ENCODE measurements at regions of chr18 and their contacts with region 1.

Region 1: DNA sequence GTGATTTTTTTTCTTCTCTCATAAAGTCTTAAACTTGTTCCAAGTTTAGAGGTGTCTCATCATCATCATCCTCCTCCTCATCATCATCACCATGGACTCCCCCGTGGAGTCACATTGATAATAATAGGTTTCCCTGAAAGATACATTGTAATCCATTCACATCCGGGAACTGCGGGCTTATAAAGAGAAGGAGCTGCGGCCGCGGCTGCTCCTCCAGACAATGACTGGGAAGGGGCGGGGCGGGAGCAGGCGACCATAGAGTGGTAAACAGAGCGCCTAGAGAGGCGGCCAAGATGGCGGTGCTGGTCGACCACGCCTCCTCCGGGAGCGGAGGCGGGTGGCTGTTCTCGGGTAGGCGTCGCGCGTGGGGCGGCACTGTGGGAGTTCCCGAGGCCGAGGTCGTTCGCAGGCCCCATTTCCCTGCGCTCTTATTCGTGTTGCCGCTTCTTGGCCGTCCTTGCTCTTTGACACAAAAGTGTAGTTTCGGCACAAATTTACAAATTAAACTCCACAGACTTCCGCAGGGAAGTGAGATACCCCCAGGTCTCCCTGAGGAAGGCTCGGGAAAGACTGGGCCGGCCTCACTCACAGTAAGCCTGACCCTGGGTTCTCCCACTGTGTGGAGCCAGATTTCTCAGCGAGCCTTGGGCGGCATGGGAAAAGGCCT is 1.8 kb upstream of the TCF4 start:
- DNase-seq: peak; percentile 97
- H3K4me3 ChIP-seq: peak overlapping the region; percentile 87 to 100 (median 98)
- H3K27ac ChIP-seq: peak overlapping the region; percentile 96
- H3K4me1 ChIP-seq: peaks cover 23% of the 10 kb centered on the region
- H3K27me3 ChIP-seq: no peaks in the 10 kb centered on the region
- CTCF ChIP-seq: no peak
- POLR2A ChIP-seq: peak; percentile 81

Region 2: GRCh38 chr18:55096261-55096951 is 493.4 kb before region 1 on chr18:
- CTCF ChIA-PET with region 1: no interaction called
- POLR2A ChIA-PET with region 1: no interaction called
- dilution Hi-C with region 1: no loop called
- intact Hi-C with region 1: loop called (anchors 5 kb)
- DNase-seq: peak; percentile 64
- H3K4me3 ChIP-seq: no peak overlapping the region
- H3K27ac ChIP-seq: peak overlapping the region; percentile 80
- H3K4me1 ChIP-seq: peaks cover 39% of the 10 kb centered on the region
- H3K27me3 ChIP-seq: peaks cover 0 to 8% of the 10 kb centered on the region in 2 experiments
- CTCF ChIP-seq: peak; percentile 46 to 59
- POLR2A ChIP-seq: no peak

Region 3: GRCh38 chr18:55322178-55322735 is 267.5 kb before region 1 on chr18:
- CTCF ChIA-PET with region 1: interaction called, 3 read pairs
- POLR2A ChIA-PET with region 1: no interaction called
- dilution Hi-C with region 1: no loop called
- intact Hi-C with region 1: loop called (anchors 5 kb)
- DNase-seq: peak; percentile 96
- H3K4me3 ChIP-seq: peak overlapping the region; percentile 28 to 89 (median 52)
- H3K27ac ChIP-seq: peak overlapping the region; percentile 82
- H3K4me1 ChIP-seq: peaks cover 66% of the 10 kb centered on the region
- H3K27me3 ChIP-seq: no peaks in the 10 kb centered on the region
- CTCF ChIP-seq: peak; percentile 4 to 20
- POLR2A ChIP-seq: no peak

Region 4: DNA sequence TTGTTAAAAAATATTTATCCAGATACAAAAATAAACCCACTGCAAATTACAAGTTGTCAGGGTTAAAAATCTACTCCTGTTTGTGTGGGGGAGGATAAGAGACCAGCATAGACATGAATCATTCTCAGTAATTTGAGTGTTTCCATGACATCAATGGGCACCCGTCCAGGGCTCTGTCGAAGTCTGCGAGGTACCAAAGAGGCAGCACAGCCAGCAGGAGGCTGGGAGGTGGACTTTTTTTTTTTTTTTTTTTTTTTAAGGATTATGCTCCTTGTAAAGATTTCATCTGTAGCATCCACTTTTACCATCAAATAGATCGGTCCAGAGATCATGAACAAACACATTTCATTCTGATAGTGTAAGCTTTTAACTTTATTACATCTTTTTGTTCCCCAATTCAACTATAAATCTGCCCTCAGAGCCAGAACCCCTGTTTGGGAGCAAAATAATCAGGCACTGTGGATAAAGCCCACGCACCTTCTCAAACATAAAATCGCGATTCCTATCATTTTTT is 183.8 kb before region 1 on chr18:
- CTCF ChIA-PET with region 1: interaction called, 6 read pairs
- POLR2A ChIA-PET with region 1: interaction called, 4 read pairs
- dilution Hi-C with region 1: no loop called
- intact Hi-C with region 1: loop called (anchors 1 kb)
- DNase-seq: peak; percentile 97
- H3K4me3 ChIP-seq: no peak overlapping the region
- H3K27ac ChIP-seq: peak overlapping the region; percentile 73
- H3K4me1 ChIP-seq: peaks cover 48% of the 10 kb centered on the region
- H3K27me3 ChIP-seq: no peaks in the 10 kb centered on the region
- CTCF ChIP-seq: peak in 1 of 2 donors; percentile 20
- POLR2A ChIP-seq: no peak

Region 5: DNA sequence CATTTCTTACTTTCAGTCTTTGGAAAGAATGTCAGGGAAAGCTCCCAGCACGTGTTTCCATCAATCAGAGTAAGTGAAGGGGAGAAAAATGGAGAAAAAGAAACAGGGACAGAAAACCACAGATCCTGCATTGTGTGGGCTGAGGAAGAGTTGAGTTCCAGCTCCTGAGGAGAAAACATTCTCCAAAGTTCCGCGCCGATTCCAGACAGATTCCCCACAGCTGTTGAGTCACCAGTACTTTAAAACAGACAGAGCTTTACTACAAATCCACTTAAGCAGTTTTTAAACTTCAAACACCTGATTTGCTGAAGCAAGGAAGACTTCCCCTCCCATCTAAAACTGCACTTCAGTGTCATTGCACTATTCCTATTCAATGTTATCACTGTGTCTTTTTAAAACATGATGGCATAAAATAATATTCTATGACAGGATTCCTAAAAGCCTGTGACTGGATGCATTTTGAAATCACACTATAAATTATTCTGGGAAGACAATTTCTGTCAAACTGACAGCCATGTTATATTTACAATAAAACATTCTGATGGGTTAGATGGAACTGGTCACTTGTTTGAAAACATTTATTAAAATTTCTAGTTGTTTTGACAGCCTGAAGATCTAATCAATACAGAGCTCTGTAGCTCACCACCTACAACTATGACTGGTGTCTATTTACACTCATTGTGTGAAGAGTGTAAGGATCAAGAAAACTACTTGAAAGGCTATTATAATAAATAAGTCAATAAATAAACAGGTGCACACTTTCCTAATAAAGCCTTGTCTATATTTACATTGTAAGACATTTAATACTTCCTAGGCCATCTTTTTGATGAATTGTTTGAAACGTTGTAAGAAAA is 42.7 kb before region 1 on chr18:
- CTCF ChIA-PET with region 1: no interaction called
- POLR2A ChIA-PET with region 1: no interaction called
- dilution Hi-C with region 1: no loop called
- intact Hi-C with region 1: no loop called
- DNase-seq: peak; percentile 19
- H3K4me3 ChIP-seq: no peak overlapping the region
- H3K27ac ChIP-seq: no peak overlapping the region
- H3K4me1 ChIP-seq: no peaks in the 10 kb centered on the region
- H3K27me3 ChIP-seq: no peaks in the 10 kb centered on the region
- CTCF ChIP-seq: no peak
- POLR2A ChIP-seq: no peak

Region 6: GRCh38 chr18:55573386-55573785 is 16.4 kb before region 1 on chr18:
- CTCF ChIA-PET with region 1: no interaction called
- POLR2A ChIA-PET with region 1: no interaction called
- dilution Hi-C with region 1: no loop called
- intact Hi-C with region 1: no loop called
- DNase-seq: no peak
- H3K4me3 ChIP-seq: no peak overlapping the region
- H3K27ac ChIP-seq: no peak overlapping the region
- H3K4me1 ChIP-seq: no peaks in the 10 kb centered on the region
- H3K27me3 ChIP-seq: no peaks in the 10 kb centered on the region
- CTCF ChIP-seq: no peak
- POLR2A ChIP-seq: no peak

Region 7: DNA sequence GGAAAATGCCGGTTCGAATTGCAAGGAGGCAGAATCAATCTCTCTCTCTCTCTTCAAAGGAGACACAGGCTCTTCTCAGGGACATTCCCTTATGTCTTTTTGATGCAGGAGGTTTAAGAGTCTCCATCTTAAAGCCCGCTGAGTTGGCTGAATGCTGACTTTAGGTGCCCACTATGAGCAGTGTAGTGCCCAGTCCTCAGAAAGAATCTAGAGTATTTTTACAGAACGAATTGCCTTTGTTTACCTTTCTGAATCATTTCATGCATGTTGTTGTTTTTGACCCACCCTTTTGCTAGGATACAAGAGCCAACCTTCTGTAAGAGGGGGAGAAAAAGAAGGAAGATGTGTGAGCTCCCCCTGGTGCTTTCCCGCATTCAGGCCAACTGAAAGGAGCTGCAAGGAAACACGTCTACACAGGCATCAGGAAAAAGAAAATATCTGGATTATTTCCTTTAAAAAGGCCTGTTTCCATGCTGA is 191.8 kb after region 1 on chr18:
- CTCF ChIA-PET with region 1: interaction called, 6 read pairs
- POLR2A ChIA-PET with region 1: interaction called, 3 read pairs
- dilution Hi-C with region 1: no loop called
- intact Hi-C with region 1: loop called (anchors 1 kb)
- DNase-seq: peak; percentile 90
- H3K4me3 ChIP-seq: no peak overlapping the region
- H3K27ac ChIP-seq: peak overlapping the region; percentile 47
- H3K4me1 ChIP-seq: peaks cover 27% of the 10 kb centered on the region
- H3K27me3 ChIP-seq: no peaks in the 10 kb centered on the region
- CTCF ChIP-seq: peak; percentile 75 to 85
- POLR2A ChIP-seq: no peak

Region 8: GRCh38 chr18:56298935-56299334 is 709.2 kb after region 1 on chr18:
- CTCF ChIA-PET with region 1: no interaction called
- POLR2A ChIA-PET with region 1: no interaction called
- dilution Hi-C with region 1: no loop called
- intact Hi-C with region 1: loop called (anchors 10 kb)
- DNase-seq: peak; percentile 75
- H3K4me3 ChIP-seq: no peak overlapping the region
- H3K27ac ChIP-seq: no peak overlapping the region
- H3K4me1 ChIP-seq: peaks cover 7% of the 10 kb centered on the region
- H3K27me3 ChIP-seq: no peaks in the 10 kb centered on the region
- CTCF ChIP-seq: peak; percentile 40 to 46
- POLR2A ChIP-seq: no peak